Naive thymus-derived CD8-positive, alpha-beta T cell (primary cell): ENCODE measurements at regions of chr1 and their contacts with region 1.

Region 1: DNA sequence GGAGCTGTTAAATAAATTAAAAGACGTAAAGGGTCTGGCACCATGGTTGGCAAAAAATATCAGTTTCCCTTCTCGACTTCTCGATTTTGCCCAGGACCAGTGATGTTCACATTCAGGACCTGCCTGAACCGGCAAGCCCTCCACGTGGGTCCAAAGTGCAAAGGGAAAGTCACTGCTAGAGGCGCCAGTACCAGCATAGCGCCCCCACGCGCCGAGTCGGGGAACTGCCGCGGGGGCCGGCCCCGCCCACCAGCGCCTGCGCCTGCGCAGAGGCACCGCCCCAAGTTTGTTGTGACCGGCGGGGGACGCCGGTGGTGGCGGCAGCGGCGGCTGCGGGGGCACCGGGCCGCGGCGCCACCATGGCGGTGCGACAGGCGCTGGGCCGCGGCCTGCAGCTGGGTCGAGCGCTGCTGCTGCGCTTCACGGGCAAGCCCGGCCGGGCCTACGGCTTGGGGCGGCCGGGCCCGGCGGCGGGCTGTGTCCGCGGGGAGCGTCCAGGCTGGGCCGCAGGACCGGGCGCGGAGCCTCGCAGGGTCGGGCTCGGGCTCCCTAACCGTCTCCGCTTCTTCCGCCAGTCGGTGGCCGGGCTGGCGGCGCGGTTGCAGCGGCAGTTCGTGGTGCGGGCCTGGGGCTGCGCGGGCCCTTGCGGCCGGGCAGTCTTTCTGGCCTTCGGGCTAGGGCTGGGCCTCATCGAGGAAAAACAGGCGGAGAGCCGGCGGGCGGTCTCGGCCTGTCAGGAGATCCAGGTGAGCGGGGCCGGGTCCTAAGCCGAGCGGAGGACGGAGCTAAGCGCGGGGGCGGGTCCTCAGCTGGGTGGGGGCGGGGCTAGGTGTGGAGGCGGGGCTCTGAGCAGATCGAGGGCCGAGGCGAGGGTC is at the start of gene PINK1:
- DNase-seq: peak; percentile 83 to 98 (median 87)
- ATAC-seq: peak; percentile 88
- H3K4me3 Mint-ChIP-seq: peak within 1 kb of the TSS; percentile 89 to 97 (median 95)
- H3K27ac Mint-ChIP-seq: peak within 1 kb of the TSS in 9 of 10 donors; percentile 83 to 96 (median 95)
- H3K4me1 Mint-ChIP-seq: peaks cover 8 to 24% (median 13%) of the 10 kb centered on the region in 4 donors
- H3K27me3 Mint-ChIP-seq: no peaks in the 10 kb centered on the region
- polyA plus RNA-seq, gene PINK1: 18.4 to 26.3 (median 19.5) TPM

Region 2: DNA sequence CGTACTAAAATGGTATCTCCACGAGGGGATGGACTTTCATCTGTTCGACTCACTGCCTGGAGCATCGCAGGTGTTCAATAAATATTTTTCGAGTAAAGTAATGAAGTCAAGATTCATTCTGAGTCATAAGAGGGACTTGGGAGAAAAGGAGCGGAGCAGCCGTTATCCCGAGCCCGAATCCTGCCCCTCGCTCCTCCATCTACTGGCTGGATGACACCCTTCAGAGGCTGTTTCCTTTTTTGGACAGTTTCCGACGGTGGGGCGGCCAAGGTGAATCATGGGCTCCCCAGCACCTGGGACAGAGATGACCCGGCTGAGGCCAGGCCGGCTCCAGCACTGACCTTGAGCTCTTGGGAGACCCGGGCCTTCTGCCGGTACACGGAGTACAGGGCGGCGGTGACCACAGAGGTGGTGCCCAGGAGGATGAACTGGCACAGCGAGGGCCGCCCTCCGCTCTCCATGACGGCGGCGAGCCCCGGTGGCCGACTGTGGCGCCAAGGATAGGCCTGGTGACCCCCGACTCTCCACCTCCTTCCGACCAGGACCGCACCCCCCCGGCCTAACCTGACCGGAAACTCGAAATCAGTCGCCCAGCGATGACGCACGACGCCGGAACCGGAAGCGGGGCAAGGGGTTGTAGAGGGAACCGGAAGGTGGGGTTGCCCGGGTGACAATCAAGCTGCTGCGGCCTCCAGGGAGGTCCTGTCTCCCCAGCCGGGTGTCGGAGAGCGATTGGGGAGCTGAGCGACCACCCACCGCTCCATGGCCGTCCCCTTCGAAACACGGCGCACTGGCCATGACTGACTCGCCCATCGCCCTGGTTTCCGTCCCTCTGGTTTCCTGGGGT is 125.6 kb before region 1 on chr1 and contains the start of gene MUL1:
- POLR2A ChIA-PET with region 1: interaction called, 10 read pairs
- DNase-seq: peak; percentile 81 to 96 (median 91)
- ATAC-seq: peak; percentile 88 to 89
- H3K4me3 Mint-ChIP-seq: peak within 1 kb of the TSS; percentile 82 to 97 (median 90)
- H3K27ac Mint-ChIP-seq: peak within 1 kb of the TSS; percentile 75 to 98 (median 96)
- H3K4me1 Mint-ChIP-seq: peaks cover 11 to 40% (median 33%) of the 10 kb centered on the region in 4 donors
- H3K27me3 Mint-ChIP-seq: peaks cover 0 to 9% (median 4%) of the 10 kb centered on the region in 5 donors
- polyA plus RNA-seq, gene MUL1: 23.4 to 36.2 (median 30.3) TPM

Region 3: DNA sequence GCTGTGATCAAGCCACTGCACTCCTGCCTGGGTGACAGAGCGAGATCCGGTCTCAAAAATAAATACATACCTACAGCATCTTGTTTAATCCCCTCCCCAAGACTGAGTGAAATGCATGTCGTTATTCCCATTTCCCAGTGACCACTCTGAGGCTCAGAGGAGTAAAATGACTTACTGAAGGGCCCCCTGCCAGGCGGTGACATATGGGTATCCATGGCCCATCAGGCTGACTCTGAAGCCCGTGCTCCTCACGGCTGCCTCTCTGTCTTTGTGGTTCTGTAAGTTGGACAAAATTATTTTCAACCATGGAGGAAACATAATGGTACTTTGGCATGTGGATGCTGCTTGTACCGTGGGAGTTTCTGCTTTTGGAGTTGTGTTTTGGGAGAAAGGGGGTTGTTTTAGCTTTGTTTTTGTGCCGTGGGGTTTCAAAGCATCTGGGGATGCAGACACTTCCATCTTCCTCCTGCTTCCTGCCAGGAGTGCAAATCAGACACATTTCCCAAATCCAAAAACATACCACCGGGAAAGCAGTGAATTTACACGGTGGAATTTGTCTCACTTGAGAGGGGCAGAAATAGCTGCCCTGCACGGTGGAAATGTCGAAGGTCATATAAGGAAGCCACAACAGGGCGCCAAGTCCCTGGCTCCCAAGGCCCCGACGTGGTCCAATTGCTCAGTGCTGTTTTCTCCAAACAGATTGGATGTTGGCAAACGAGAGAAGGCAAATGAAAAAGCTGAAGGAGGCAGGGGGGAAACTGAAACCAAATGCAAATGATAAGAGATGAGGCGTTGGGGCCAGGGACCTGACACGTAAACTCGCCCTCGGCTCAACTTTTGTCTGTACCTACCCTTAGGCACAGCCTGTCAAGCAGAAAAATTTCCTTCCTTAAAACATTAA is 17.2 kb before region 1 on chr1:
- POLR2A ChIA-PET with region 1: no interaction called
- DNase-seq: no peak
- ATAC-seq: no peak
- H3K4me3 Mint-ChIP-seq: no peak overlapping the region
- H3K27ac Mint-ChIP-seq: peak overlapping the region in 1 of 10 donors; percentile 15
- H3K4me1 Mint-ChIP-seq: no peaks in the 10 kb centered on the region
- H3K27me3 Mint-ChIP-seq: peaks cover 0 to 12% (median 8%) of the 10 kb centered on the region in 5 donors

Region 4: GRCh38 chr1:20661207-20662109 is 28.0 kb after region 1 on chr1 and contains the start of gene DDOST:
- POLR2A ChIA-PET with region 1: interaction called, 49 read pairs
- DNase-seq: peak; percentile 85 to 97 (median 94)
- ATAC-seq: peak; percentile 96
- H3K4me3 Mint-ChIP-seq: peak within 1 kb of the TSS; percentile 97 to 100 (median 99)
- H3K27ac Mint-ChIP-seq: peak within 1 kb of the TSS; percentile 97 to 99 (median 99)
- H3K4me1 Mint-ChIP-seq: peaks cover 33 to 54% (median 53%) of the 10 kb centered on the region in 4 donors
- H3K27me3 Mint-ChIP-seq: no peaks in the 10 kb centered on the region
- polyA plus RNA-seq, gene DDOST: 209 to 255 (median 225) TPM